Vagina (tissue), 2 donors: ENCODE measurements at regions of chr3 and their contacts with region 1.

Region 1: GRCh38 chr3:100040451-100041225 is 73.7 kb downstream of the FILIP1L start:
- DNase-seq: no peak
- H3K4me3 ChIP-seq: no peak overlapping the region
- H3K27ac ChIP-seq: peak overlapping the region; percentile 81
- H3K4me1 ChIP-seq: peaks cover 30% of the 10 kb centered on the region
- H3K27me3 ChIP-seq: no peaks in the 10 kb centered on the region
- CTCF ChIP-seq: no peak
- POLR2A ChIP-seq: no peak

Region 2: DNA sequence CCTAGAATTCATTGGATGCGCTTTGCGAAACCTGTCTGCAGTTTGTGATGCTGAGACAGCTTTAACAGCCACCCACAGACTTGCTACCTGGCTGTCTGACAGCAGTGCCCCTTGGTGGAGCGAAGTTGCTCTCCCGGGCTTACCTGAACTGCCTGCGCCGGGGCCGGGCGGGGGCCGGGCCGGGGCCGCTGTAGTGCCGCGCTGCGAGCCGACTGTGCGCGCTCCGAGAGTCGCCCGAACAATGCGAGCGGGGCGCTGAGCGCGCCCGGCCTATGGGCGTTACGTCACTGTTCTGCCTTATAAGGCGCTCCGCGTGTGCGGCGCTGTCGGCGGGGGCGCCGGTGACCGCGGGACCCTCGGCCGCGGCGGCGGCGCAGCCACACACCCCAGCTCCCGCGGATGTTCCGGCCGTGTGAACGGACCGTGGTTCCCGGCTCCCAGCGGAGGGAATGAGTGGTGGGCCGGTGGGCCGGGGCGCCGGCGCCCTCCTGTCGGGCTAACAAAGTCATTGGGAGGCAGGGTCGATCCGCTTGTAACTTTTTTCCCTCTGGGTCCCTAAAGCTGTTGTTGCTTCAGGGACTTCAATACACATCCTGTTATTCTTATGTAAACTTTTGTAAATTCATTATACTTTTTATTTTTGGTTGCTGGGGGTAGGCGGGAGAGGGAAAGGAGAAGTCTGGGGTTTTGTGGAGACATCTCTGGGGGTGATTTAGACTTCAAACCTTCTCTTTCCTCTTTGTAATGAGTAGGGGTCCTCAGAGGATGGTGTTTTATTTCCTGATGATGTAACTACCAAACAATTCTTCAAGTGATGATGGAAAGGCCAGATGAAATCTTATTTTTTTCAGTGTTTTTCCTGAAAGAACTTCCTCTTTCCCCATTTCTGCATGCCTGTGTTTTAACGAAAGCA is 164.5 kb before region 1 on chr3:
- intact Hi-C with region 1: loop called (anchors 1 kb)
- DNase-seq: no peak
- H3K4me3 ChIP-seq: peak overlapping the region; percentile 71 to 83
- H3K27ac ChIP-seq: peak overlapping the region; percentile 94
- H3K4me1 ChIP-seq: peaks cover 26% of the 10 kb centered on the region
- H3K27me3 ChIP-seq: no peaks in the 10 kb centered on the region
- CTCF ChIP-seq: no peak
- POLR2A ChIP-seq: peak in 1 of 2 donors; percentile 84

Region 3: DNA sequence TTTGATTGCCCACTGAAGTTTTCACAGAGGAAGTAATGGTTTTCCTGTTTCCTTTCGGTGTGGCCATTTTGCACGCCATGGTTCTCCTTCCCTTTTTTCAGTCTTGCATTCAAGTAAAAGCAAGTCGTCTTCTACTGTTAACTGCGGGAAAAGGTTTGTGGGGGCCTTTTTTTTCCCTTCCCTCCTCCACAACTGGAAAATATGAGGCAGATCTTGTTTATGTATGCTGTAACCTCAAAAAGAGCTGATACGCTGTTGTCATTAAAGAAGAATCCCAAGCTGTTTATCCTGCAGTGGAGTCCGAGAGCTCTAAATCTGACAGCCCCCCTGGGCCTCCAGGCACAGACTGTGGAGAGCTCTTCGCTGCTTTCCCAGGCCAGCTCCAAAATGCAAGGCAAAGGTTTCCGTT is 33.3 kb after region 1 on chr3:
- intact Hi-C with region 1: no loop called
- DNase-seq: no peak
- H3K4me3 ChIP-seq: no peak overlapping the region
- H3K27ac ChIP-seq: peak overlapping the region; percentile 55
- H3K4me1 ChIP-seq: peaks cover 34% of the 10 kb centered on the region
- H3K27me3 ChIP-seq: no peaks in the 10 kb centered on the region
- CTCF ChIP-seq: no peak
- POLR2A ChIP-seq: no peak